ENCODE measurements at regions of chr5 and their contacts with region 1.

Region 1: GRCh38 chr5:14405267-14405666 is 176.3 kb upstream of the OTULINL start:
- DNase-seq: no peak
- ATAC-seq: no peak
- H3K4me3 ChIP-seq: no peak overlapping the region
- H3K4me3 Mint-ChIP-seq: no peak overlapping the region
- H3K27ac ChIP-seq: no peak overlapping the region
- H3K27ac Mint-ChIP-seq: no peak overlapping the region
- H3K4me1 ChIP-seq: no peaks in the 10 kb centered on the region
- H3K4me1 Mint-ChIP-seq: peaks cover 13% of the 10 kb centered on the region
- H3K27me3 ChIP-seq: no peaks in the 10 kb centered on the region
- H3K27me3 Mint-ChIP-seq: no peaks in the 10 kb centered on the region
- CTCF ChIP-seq: no peak

Region 2: GRCh38 chr5:14505310-14506032 is 100.2 kb after region 1 on chr5:
- CTCF ChIA-PET with region 1: no interaction called
- POLR2A ChIA-PET with region 1: no interaction called
- intact Hi-C with region 1: loop called in 1 of 2 experiments (anchors 10 kb)
- DNase-seq: no peak
- ATAC-seq: no peak
- H3K4me3 ChIP-seq: no peak overlapping the region
- H3K4me3 Mint-ChIP-seq: no peak overlapping the region
- H3K27ac ChIP-seq: no peak overlapping the region
- H3K27ac Mint-ChIP-seq: no peak overlapping the region
- H3K4me1 ChIP-seq: no peaks in the 10 kb centered on the region
- H3K4me1 Mint-ChIP-seq: no peaks in the 10 kb centered on the region
- H3K27me3 ChIP-seq: no peaks in the 10 kb centered on the region
- H3K27me3 Mint-ChIP-seq: no peaks in the 10 kb centered on the region
- CTCF ChIP-seq: no peak

Measured in CD8-positive, alpha-beta T cell (primary cell).